PC-9 (cell line): ENCODE measurements at regions of chr11 and their contacts with region 1.

Region 1: GRCh38 chr11:62542750-62543567 is 3.6 kb downstream of the AHNAK start:
- DNase-seq: peak; percentile 76 to 90
- H3K4me3 ChIP-seq: peak overlapping the region; percentile 98
- H3K27ac ChIP-seq: peak overlapping the region; percentile 72
- H3K4me1 ChIP-seq: peaks cover 78% of the 10 kb centered on the region
- H3K27me3 ChIP-seq: no peaks in the 10 kb centered on the region
- CTCF ChIP-seq: peak; percentile 100

Region 2: DNA sequence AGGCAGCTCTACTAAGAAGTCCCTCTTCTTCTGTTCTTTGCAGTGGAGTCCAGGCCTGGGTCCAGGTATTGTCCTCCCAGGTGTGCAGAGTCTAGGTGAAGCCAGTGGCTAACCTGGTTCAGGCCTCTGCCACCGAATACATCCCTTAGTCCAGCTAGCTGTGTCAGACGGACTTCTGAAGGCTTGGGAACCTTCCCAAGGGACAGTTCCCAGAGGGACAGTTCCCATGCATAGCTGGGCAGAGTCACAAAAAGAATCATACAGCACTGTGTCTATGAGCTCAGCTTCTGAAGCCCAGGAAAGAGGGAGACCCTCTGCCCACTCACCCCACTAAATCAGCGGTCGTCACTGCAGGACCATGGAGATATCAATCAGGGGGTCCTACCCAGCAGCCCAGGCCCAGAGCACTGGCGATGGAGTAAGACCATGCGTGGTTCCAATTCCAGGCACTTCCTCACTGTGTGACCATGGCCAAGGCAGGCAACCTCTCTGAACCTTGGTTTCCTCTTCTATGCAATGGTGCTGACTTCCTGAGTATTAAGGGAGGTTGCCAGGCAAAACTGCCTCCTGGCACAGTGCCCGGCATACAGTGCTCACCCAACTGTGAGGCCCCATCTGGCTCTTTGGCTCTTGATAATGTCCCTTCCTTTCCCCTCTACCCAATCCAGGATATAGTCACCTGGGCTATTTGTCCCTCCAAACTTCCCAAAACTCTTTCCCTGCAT is 1754.4 kb before region 1 on chr11:
- CTCF ChIA-PET with region 1: interaction called, 12 read pairs
- POLR2A ChIA-PET with region 1: no interaction called
- intact Hi-C with region 1: no loop called
- DNase-seq: no peak
- H3K4me3 ChIP-seq: no peak overlapping the region
- H3K27ac ChIP-seq: no peak overlapping the region
- H3K4me1 ChIP-seq: no peaks in the 10 kb centered on the region
- H3K27me3 ChIP-seq: peaks cover 38% of the 10 kb centered on the region
- CTCF ChIP-seq: no peak

Region 3: GRCh38 chr11:62427630-62428233 is 115.2 kb before region 1 on chr11:
- CTCF ChIA-PET with region 1: interaction called, 58 read pairs
- POLR2A ChIA-PET with region 1: no interaction called
- intact Hi-C with region 1: loop called (anchors 1 kb)
- DNase-seq: peak in 1 of 2 experiments; percentile 69
- H3K4me3 ChIP-seq: no peak overlapping the region
- H3K27ac ChIP-seq: peak overlapping the region; percentile 91
- H3K4me1 ChIP-seq: peaks cover 45% of the 10 kb centered on the region
- H3K27me3 ChIP-seq: no peaks in the 10 kb centered on the region
- CTCF ChIP-seq: no peak

Region 4: GRCh38 chr11:62497132-62497915 is 45.6 kb before region 1 on chr11:
- CTCF ChIA-PET with region 1: interaction called, 11 read pairs
- POLR2A ChIA-PET with region 1: interaction called, 10 read pairs
- intact Hi-C with region 1: loop called (anchors 1 kb)
- DNase-seq: peak; percentile 76 to 98
- H3K4me3 ChIP-seq: no peak overlapping the region
- H3K27ac ChIP-seq: peak overlapping the region; percentile 73
- H3K4me1 ChIP-seq: peaks cover 28% of the 10 kb centered on the region
- H3K27me3 ChIP-seq: no peaks in the 10 kb centered on the region
- CTCF ChIP-seq: peak; percentile 74

Region 5: GRCh38 chr11:62556108-62556871 is 13.3 kb after region 1 on chr11:
- CTCF ChIA-PET with region 1: interaction called, 49 read pairs
- POLR2A ChIA-PET with region 1: interaction called, 20 read pairs
- intact Hi-C with region 1: loop called (anchors 1 kb)
- DNase-seq: peak; percentile 90 to 94
- H3K4me3 ChIP-seq: peak overlapping the region; percentile 38; the same call in 1 of the 2 replicates
- H3K27ac ChIP-seq: peak overlapping the region; percentile 92
- H3K4me1 ChIP-seq: peaks cover 96% of the 10 kb centered on the region
- H3K27me3 ChIP-seq: no peaks in the 10 kb centered on the region
- CTCF ChIP-seq: no peak

Region 6: GRCh38 chr11:62710001-62710345 is 167.0 kb after region 1 on chr11:
- CTCF ChIA-PET with region 1: no interaction called
- POLR2A ChIA-PET with region 1: no interaction called
- intact Hi-C with region 1: no loop called
- DNase-seq: no peak
- H3K4me3 ChIP-seq: peak overlapping the region; percentile 54
- H3K27ac ChIP-seq: peak overlapping the region; percentile 87
- H3K4me1 ChIP-seq: peaks cover 31% of the 10 kb centered on the region
- H3K27me3 ChIP-seq: no peaks in the 10 kb centered on the region
- CTCF ChIP-seq: peak; percentile 21; the same call in 1 of the 2 replicates

Region 7: GRCh38 chr11:62860835-62861563 is 318.0 kb after region 1 on chr11:
- CTCF ChIA-PET with region 1: interaction called, 3 read pairs
- POLR2A ChIA-PET with region 1: no interaction called
- intact Hi-C with region 1: loop called (anchors 5 kb)
- DNase-seq: no peak
- H3K4me3 ChIP-seq: no peak overlapping the region
- H3K27ac ChIP-seq: no peak overlapping the region
- H3K4me1 ChIP-seq: peaks cover 9% of the 10 kb centered on the region
- H3K27me3 ChIP-seq: no peaks in the 10 kb centered on the region
- CTCF ChIP-seq: no peak